Activated CD4-positive, alpha-beta T cell treated with anti-CD3 and anti-CD28 coated beads, Interleukin-2, amount 10 ng/mL, durations not matched to agents 7 days and 5 days (primary cell): ENCODE measurements at regions of chr1 and their contacts with region 1.

Region 1: GRCh38 chr1:205711104-205712020 is 31.1 kb upstream of the SLC45A3 start:
- DNase-seq: peak; percentile 84
- H3K4me3 Mint-ChIP-seq: no peak overlapping the region
- H3K27ac Mint-ChIP-seq: peak overlapping the region; percentile 17
- H3K4me1 Mint-ChIP-seq: peaks cover 19% of the 10 kb centered on the region
- H3K27me3 Mint-ChIP-seq: no peaks in the 10 kb centered on the region

Region 2: DNA sequence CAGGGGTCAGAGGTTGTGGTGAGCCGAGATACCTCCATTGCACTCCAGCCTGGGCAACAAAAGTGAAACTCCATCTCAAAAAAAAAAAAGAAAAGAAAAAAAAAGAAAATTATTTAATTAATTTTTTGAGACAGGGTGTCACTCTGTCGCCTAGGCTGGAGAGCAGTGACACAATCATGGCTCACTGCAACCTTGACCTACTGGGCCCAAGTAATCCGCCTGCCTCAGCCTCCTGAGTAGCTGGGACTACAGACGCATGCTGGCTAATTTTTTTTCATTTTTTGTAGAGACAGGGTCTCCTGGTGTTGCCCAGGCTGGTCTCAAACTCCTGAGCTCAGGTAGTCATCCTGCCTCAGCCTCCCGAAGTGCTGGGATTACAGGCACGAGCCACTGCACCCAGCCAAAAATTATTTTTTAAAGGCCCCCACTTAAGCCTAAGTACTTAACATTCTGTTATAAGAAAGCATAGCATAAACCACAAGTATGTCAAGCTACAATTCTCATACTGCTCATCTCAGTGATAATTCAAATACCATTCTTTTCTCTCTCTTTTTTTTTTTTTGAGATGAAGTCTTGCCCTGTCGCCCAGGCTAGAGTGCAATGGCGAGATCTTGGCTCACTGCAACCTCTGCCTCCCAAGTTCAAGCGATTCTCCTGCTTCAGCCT is 18.7 kb after region 1 on chr1:
- CTCF ChIA-PET with region 1: interaction called, 11 read pairs
- POLR2A ChIA-PET with region 1: no interaction called
- DNase-seq: no peak
- H3K4me3 Mint-ChIP-seq: no peak overlapping the region
- H3K27ac Mint-ChIP-seq: no peak overlapping the region
- H3K4me1 Mint-ChIP-seq: peaks cover 29% of the 10 kb centered on the region
- H3K27me3 Mint-ChIP-seq: no peaks in the 10 kb centered on the region

Region 3: GRCh38 chr1:205849619-205850355 is 138.4 kb after region 1 on chr1 and contains the start of gene PM20D1:
- CTCF ChIA-PET with region 1: no interaction called
- POLR2A ChIA-PET with region 1: no interaction called
- DNase-seq: peak; percentile 92
- H3K4me3 Mint-ChIP-seq: peak within 1 kb of the TSS; percentile 82
- H3K27ac Mint-ChIP-seq: peak within 1 kb of the TSS; percentile 95
- H3K4me1 Mint-ChIP-seq: peaks cover 20% of the 10 kb centered on the region
- H3K27me3 Mint-ChIP-seq: no peaks in the 10 kb centered on the region
- total RNA-seq, gene PM20D1: 0.94 to 1.0 TPM